Dendritic cell treated with granulocyte-macrophage colony-stimulating factor and Interleukin-4, amounts not matched to agents 40 ng/mL and 50 ng/mL, for 4 days (primary cell): ENCODE measurements at regions of chr15 and their contacts with region 1.

Region 1: DNA sequence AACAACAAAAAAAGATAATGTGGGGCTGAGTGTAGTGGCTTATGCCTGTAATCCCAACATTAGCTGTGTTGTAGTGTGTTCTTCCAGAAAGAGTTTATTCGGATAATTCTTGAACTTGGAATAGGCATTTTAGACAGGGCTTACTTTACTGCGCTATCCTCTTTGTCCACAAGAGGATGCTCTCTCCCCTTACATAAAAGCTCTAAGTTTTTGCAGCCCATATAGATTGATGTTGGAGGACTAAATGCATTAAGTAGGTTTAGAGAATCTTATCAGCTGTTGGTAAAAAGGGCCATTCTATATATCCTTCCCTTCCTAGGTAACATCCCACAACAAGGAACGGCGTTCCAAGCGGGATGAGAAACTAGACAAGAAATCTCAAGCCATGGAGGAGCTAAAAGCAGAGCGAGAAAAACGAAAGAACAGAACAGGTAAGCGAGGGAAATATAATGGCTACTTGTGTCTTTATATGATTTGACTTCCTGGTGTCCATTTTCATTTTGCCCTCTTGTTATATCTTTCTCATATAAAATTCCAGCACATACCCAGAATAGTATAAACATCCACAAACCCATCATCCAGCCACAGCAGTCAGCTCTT is 27.8 kb upstream of the ITPKA start:
- H3K4me3 Mint-ChIP-seq: no peak overlapping the region
- H3K27ac Mint-ChIP-seq: no peak overlapping the region
- H3K4me1 Mint-ChIP-seq: no peaks in the 10 kb centered on the region
- H3K27me3 Mint-ChIP-seq: no peaks in the 10 kb centered on the region

Region 2: DNA sequence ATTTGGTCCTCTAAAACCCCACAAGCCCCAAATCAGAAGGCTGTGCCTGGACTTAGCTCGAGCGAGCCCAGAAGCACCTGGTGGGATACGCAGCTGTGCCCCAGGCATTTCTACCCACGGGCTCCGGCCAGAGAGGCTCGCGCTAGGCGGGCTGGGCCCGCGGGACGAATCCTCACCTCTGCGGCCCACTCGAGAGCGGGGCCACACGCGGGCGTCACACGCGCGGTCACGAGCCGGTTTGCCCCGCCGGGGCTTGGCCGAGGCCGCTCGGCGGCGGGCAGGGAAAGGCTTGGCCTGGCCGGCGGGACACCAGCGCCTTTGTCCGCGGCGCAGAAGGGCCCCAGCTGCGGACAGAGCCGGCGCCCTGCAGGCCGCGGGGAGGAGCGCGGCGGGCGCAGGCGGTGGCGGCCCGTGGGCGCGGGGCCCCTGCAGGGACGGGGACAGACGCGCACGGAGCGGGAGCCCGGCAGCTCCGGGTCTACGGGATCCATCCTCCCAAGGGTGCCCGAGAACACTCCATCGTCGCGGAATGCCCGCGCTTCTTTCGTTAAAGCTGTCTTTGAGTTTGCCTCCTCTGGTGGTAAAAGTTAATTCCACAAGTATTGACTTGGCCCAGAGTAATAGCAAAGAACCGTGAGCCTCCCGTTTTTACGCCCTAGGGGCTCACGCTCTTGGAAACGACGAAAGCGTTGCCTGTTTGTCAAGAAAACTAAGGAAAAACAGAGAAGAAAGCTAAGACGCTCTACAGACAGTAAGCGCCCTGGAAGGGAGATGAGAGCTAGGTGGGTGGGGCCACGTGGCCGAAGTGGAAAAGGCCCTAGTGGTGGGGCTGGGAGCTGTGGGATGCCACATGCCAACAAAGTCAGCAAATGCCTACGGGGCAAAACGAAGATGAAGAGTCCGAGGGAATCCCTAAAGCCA is 119.5 kb after region 1 on chr15:
- intact Hi-C with region 1: loop called (anchors 10 kb)
- H3K4me3 Mint-ChIP-seq: peak overlapping the region; percentile 68
- H3K27ac Mint-ChIP-seq: no peak overlapping the region
- H3K4me1 Mint-ChIP-seq: peaks cover 5% of the 10 kb centered on the region
- H3K27me3 Mint-ChIP-seq: peaks cover 49% of the 10 kb centered on the region

Region 3: DNA sequence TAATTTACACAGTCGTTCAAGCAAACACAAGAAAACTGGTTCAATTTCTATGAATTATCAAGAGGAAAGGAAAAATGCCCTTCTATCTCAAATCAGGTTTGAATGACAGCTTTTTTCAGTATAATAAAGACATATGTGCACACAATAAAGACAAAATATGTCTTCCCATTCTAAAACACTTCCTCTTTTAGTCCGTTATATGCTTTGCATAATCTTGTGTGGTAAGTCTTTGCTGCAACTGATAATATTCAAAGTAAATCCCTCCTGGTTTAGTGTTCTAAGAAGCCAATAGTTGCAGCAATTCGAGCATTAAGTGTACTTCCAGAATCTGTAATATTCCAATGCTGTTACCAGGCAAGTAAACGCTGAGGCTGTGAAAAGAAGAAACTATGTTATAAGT is 264.6 kb after region 1 on chr15:
- intact Hi-C with region 1: loop called (anchors 10 kb)
- H3K4me3 Mint-ChIP-seq: no peak overlapping the region
- H3K27ac Mint-ChIP-seq: no peak overlapping the region
- H3K4me1 Mint-ChIP-seq: peaks cover 5% of the 10 kb centered on the region
- H3K27me3 Mint-ChIP-seq: no peaks in the 10 kb centered on the region